IMR-90 (cell line): ENCODE measurements at regions of chr20 and their contacts with region 1.

Region 1: GRCh38 chr20:33909331-33909921 is 84.3 kb upstream of the RALY start:
- DNase-seq: peak; percentile 96
- ATAC-seq: peak; percentile 77
- H3K4me3 ChIP-seq: no peak overlapping the region
- H3K27ac ChIP-seq: peak overlapping the region; percentile 79
- H3K4me1 ChIP-seq: peaks cover 30% of the 10 kb centered on the region
- H3K27me3 ChIP-seq: no peaks in the 10 kb centered on the region; the same call in 1 of the 2 replicates
- CTCF ChIP-seq: no peak
- POLR2A ChIP-seq: no peak
- RAD21 ChIP-seq: peak; percentile 7; the same call in 1 of the 2 replicates

Region 2: GRCh38 chr20:33896509-33896908 is 12.9 kb before region 1 on chr20:
- CTCF ChIA-PET with region 1: no interaction called
- POLR2A ChIA-PET with region 1: no interaction called
- dilution Hi-C with region 1: no loop called
- in situ Hi-C with region 1: no loop called
- intact Hi-C with region 1: loop called (anchors 1 kb)
- DNase-seq: peak; percentile 70
- ATAC-seq: peak; percentile 18; the same call in 1 of the 2 replicates
- H3K4me3 ChIP-seq: no peak overlapping the region
- H3K27ac ChIP-seq: no peak overlapping the region
- H3K4me1 ChIP-seq: peaks cover 13% of the 10 kb centered on the region
- H3K27me3 ChIP-seq: no peaks in the 10 kb centered on the region
- CTCF ChIP-seq: no peak
- POLR2A ChIP-seq: no peak
- RAD21 ChIP-seq: no peak

Region 3: GRCh38 chr20:33992923-33993575 is 83.6 kb after region 1 on chr20:
- CTCF ChIA-PET with region 1: no interaction called
- POLR2A ChIA-PET with region 1: no interaction called
- dilution Hi-C with region 1: no loop called
- in situ Hi-C with region 1: no loop called
- intact Hi-C with region 1: loop called (anchors 1 kb)
- DNase-seq: peak; percentile 99
- ATAC-seq: peak; percentile 84
- H3K4me3 ChIP-seq: peak overlapping the region; percentile 88
- H3K27ac ChIP-seq: peak overlapping the region; percentile 95
- H3K4me1 ChIP-seq: peaks cover 8% of the 10 kb centered on the region
- H3K27me3 ChIP-seq: no peaks in the 10 kb centered on the region
- CTCF ChIP-seq: no peak
- POLR2A ChIP-seq: peak; percentile 88
- RAD21 ChIP-seq: no peak